HEK293 (cell line): ENCODE measurements at regions of chr1 and their contacts with region 1.

Region 1: DNA sequence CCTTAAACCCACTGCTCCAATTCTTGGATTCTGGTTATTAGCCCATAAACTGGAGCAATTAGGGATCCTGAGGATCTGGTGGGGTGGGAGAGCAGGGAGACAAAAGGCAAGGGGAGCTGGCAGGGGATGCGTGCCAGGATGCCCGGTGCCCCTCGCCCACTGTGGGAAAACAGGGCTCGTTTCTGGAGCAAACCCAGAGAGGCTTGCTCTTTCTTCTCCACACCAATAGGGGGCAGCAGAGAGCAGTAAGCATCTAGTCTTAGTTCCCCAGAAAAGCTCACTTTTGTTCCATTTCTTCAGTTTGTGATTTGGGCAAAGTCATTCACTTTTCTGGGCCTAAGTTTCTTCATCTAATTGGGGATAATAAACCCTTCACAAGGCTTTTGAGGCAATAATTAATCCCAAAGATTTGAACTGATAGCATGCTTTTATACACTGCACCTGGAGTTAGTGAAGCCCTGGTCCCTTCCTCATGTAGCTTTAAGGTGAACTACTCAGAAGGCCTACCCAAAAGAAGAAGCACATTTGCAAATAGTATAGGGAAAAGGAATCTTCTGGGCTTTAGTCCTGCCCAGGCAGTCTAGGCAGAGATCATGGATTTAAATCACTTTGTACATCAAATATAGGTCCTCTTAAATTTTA is 160.6 kb upstream of the USP24 start:
- H3K4me3 ChIP-seq: no peak overlapping the region
- H3K27ac ChIP-seq: no peak overlapping the region
- H3K4me1 ChIP-seq: no peaks in the 10 kb centered on the region
- CTCF ChIP-seq: peak; percentile 44; the same call in 1 of the 2 replicates

Region 2: DNA sequence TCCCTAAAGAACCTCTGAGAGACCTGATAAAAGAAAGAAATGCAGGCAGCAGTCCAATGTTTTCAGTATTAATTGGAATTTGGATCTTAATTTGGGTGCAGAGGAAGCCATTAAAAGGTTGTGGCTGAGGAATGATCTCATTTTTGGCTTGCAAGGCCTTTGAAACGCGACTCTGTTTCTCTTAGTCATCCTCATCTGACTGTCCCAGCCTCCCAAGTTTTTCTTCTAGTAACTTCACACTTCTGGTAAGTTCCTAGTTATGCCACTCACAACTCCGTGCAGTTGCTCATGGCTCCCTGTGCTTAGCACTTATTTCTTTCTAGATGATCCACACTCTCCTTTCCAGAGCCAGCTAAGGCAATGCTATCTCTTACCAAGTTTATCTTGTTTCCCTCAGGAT is 13.2 kb before region 1 on chr1:
- CTCF ChIA-PET with region 1: interaction called, 11 read pairs
- POLR2A ChIA-PET with region 1: no interaction called
- H3K4me3 ChIP-seq: no peak overlapping the region
- H3K27ac ChIP-seq: no peak overlapping the region
- H3K4me1 ChIP-seq: no peaks in the 10 kb centered on the region
- CTCF ChIP-seq: no peak

Region 3: GRCh38 chr1:55396381-55396891 is 20.7 kb after region 1 on chr1:
- CTCF ChIA-PET with region 1: interaction called, 15 read pairs
- POLR2A ChIA-PET with region 1: no interaction called
- H3K4me3 ChIP-seq: no peak overlapping the region
- H3K27ac ChIP-seq: no peak overlapping the region
- H3K4me1 ChIP-seq: no peaks in the 10 kb centered on the region
- CTCF ChIP-seq: no peak